ENCODE measurements at regions of chr13 and their contacts with region 1.

Region 1: GRCh38 chr13:34762312-34762711 is 179.8 kb upstream of the NBEA start:
- DNase-seq: no peak
- ATAC-seq: no peak
- H3K4me3 ChIP-seq: no peak overlapping the region
- H3K27ac ChIP-seq: no peak overlapping the region
- H3K4me1 ChIP-seq: peaks cover 0 to 7% (median 0%) of the 10 kb centered on the region in 9 donors
- H3K27me3 ChIP-seq: no peaks in the 10 kb centered on the region
- CTCF ChIP-seq: no peak

Region 2: GRCh38 chr13:34391073-34391472 is 371.2 kb before region 1 on chr13:
- intact Hi-C with region 1: no loop called
- DNase-seq: no peak
- ATAC-seq: no peak
- H3K4me3 ChIP-seq: no peak overlapping the region
- H3K27ac ChIP-seq: no peak overlapping the region
- H3K4me1 ChIP-seq: no peaks in the 10 kb centered on the region
- H3K27me3 ChIP-seq: no peaks in the 10 kb centered on the region
- CTCF ChIP-seq: no peak

Region 3: DNA sequence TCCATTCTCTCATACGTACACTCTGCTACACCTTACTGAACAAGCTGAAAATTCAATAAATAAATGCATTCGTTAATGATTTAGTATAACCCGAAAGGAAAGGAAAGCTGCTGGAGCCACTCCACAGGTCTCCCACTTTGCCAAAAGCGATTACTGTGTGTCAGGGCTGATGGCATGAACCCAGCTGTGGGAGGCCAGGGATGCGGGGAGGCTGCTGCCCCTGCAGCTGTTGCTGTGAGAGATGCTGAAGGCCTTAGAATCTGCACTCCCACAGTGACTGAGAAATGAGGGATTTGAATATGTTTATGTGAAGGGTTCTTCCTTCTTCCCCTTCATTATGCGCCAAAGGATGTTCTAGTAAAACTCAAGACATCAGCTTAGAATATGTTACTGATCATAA is 121.1 kb after region 1 on chr13:
- intact Hi-C with region 1: loop called in 1 of 10 experiments (anchors 10 kb)
- DNase-seq: no peak
- ATAC-seq: no peak
- H3K4me3 ChIP-seq: no peak overlapping the region
- H3K27ac ChIP-seq: no peak overlapping the region
- H3K4me1 ChIP-seq: peaks cover 0 to 33% (median 5%) of the 10 kb centered on the region in 9 donors
- H3K27me3 ChIP-seq: no peaks in the 10 kb centered on the region
- CTCF ChIP-seq: no peak

Measured in heart right ventricle (tissue), 16 donors.